ENCODE measurements at regions of chr2 and their contacts with region 1.

Region 1: DNA sequence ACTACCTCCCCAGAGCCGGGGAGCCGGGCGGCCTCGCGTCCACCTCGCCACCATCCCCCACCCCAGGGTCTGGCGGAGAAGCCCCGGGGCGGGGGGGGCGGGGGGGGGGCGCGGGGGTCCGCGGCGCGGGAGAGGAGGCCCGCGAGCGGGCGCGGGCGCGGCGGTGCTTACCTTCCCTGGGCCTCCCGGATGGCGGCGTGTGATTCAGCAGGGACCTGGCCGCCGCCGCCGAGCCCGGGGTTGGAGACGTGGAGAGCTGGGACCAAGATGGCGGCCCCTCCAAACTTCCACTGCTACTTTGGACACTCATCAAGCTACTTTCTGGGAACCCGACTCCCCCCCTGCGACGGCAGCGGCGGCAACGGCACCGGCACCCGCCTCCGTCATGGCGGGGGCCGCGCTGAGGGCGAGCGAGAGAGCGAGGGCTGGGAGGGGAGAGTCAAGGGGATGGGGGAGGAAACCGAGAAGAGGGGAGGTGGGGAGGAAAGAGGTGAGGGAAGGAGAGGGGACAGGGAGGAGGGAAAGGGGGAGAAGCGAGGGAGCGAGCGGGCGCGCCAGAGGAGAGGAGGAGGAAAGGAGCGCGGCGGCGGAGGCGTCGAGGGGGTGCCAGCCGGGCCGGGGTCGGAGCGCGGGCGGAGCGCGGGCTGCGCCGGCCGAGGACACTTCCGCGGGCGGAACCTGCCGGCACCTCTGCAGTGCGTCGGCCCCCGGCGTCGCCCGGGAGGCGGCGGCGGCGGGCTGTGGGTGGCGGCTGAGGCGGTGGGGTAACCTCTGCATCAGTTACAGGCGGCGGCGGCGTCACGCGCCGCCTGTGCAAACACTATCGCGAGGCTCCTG is at the start of gene TLK1:
- DNase-seq: peak; percentile 67 to 76
- H3K4me3 ChIP-seq: peak within 1 kb of the TSS; percentile 93
- H3K27ac ChIP-seq: peak within 1 kb of the TSS; percentile 93
- H3K4me1 ChIP-seq: peaks cover 61% of the 10 kb centered on the region
- H3K27me3 ChIP-seq: no peaks in the 10 kb centered on the region
- CTCF ChIP-seq: no peak
- total RNA-seq, gene TLK1: 74.1 and 101 TPM in 2 replicates

Region 2: DNA sequence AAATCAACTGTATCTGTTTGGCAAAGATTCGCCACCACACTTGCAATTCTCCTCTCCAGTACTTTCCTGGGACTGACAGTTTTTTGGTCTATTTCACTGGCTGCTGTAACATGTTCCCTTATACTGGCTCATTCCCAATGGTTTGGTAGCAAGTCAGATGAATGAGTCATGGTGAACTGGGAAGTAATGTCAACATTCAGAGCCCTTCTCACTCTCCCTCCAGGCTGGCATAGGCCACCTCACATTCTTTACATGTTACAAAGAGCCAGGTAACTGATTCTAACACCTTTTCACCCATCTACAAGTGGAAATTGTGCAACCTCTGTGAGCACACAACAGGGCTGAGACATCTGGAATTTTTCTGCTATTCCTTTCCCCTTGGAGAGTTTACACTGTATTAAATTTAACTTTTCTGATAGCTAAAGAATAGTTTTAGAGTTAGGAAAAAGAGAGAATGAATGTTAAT is 111.7 kb after region 1 on chr2:
- CTCF ChIA-PET with region 1: no interaction called
- POLR2A ChIA-PET with region 1: interaction called, 3 read pairs
- intact Hi-C with region 1: loop called (anchors 1 kb)
- DNase-seq: peak; percentile 82 to 100
- H3K4me3 ChIP-seq: peak overlapping the region; percentile 30; the same call in 1 of the 2 replicates
- H3K27ac ChIP-seq: peak overlapping the region; percentile 93
- H3K4me1 ChIP-seq: peaks cover 43% of the 10 kb centered on the region
- H3K27me3 ChIP-seq: no peaks in the 10 kb centered on the region
- CTCF ChIP-seq: no peak

Region 3: GRCh38 chr2:171334171-171334570 is 173.8 kb after region 1 on chr2:
- CTCF ChIA-PET with region 1: no interaction called
- POLR2A ChIA-PET with region 1: interaction called, 12 read pairs
- intact Hi-C with region 1: no loop called
- DNase-seq: no peak
- H3K4me3 ChIP-seq: no peak overlapping the region
- H3K27ac ChIP-seq: no peak overlapping the region
- H3K4me1 ChIP-seq: peaks cover 6% of the 10 kb centered on the region
- H3K27me3 ChIP-seq: no peaks in the 10 kb centered on the region
- CTCF ChIP-seq: no peak

Region 4: GRCh38 chr2:171416009-171416926 is 255.9 kb after region 1 on chr2:
- CTCF ChIA-PET with region 1: interaction called, 8 read pairs
- POLR2A ChIA-PET with region 1: no interaction called
- intact Hi-C with region 1: loop called (anchors 1 kb)
- DNase-seq: peak; percentile 79 to 85
- H3K4me3 ChIP-seq: no peak overlapping the region
- H3K27ac ChIP-seq: no peak overlapping the region
- H3K4me1 ChIP-seq: peaks cover 10% of the 10 kb centered on the region; the same call in 1 of the 2 replicates
- H3K27me3 ChIP-seq: no peaks in the 10 kb centered on the region
- CTCF ChIP-seq: peak; percentile 90

Region 5: DNA sequence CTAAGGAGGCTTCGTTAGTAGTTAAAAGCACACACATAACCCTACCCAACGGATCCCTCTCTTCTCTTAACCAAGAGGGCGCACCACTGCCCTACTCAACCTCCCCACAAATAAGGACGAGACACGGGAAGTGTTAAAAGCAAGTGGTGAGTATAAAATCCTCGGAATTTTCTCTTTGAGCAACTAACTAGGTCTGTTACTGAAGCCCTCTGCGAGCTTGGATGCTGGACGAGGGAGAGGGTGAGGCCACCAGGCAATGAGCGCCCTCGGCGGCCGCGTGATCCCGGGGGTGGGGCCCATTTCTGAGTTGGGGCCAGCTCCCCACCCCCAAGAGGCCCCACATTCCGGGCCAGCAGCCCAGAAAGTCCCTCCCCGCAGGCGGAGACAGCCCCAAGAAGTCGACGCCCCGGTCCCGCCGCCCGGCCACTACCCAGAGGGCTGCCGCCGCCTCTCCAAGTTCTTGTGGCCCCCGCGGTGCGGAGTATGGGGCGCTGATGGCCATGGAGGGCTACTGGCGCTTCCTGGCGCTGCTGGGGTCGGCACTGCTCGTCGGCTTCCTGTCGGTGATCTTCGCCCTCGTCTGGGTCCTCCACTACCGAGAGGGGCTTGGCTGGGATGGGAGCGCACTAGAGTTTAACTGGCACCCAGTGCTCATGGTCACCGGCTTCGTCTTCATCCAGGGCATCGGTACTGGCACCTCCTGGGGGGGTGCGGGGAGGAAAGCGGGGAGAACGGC is 361.9 kb after region 1 on chr2 and contains the start of gene CYBRD1:
- CTCF ChIA-PET with region 1: no interaction called
- POLR2A ChIA-PET with region 1: no interaction called
- intact Hi-C with region 1: loop called (anchors 5 kb)
- DNase-seq: peak; percentile 66 to 92
- H3K4me3 ChIP-seq: peak within 1 kb of the TSS; percentile 83
- H3K27ac ChIP-seq: peak within 1 kb of the TSS; percentile 81
- H3K4me1 ChIP-seq: peaks cover 21% of the 10 kb centered on the region
- H3K27me3 ChIP-seq: no peaks in the 10 kb centered on the region
- CTCF ChIP-seq: no peak
- total RNA-seq, gene CYBRD1: 125 and 132 TPM in 2 replicates